Activated B cell treated with CpG ODN at 0.5 μM for 24 hours (primary cell): ENCODE measurements at regions of chr14 and their contacts with region 1.

Region 1: GRCh38 chr14:100271247-100271939 is 32.4 kb downstream of the YY1 start:
- DNase-seq: no peak
- ATAC-seq: no peak
- H3K4me3 Mint-ChIP-seq: no peak overlapping the region
- H3K27ac Mint-ChIP-seq: no peak overlapping the region
- H3K4me1 Mint-ChIP-seq: peaks cover 24% of the 10 kb centered on the region
- H3K27me3 Mint-ChIP-seq: no peaks in the 10 kb centered on the region
- CTCF ChIP-seq: no peak

Region 2: GRCh38 chr14:100078991-100079725 is 192.2 kb before region 1 on chr14:
- CTCF ChIA-PET with region 1: no interaction called
- POLR2A ChIA-PET with region 1: no interaction called
- intact Hi-C with region 1: no loop called
- DNase-seq: no peak
- ATAC-seq: peak; percentile 60
- H3K4me3 Mint-ChIP-seq: peak overlapping the region; percentile 49
- H3K27ac Mint-ChIP-seq: peak overlapping the region; percentile 80
- H3K4me1 Mint-ChIP-seq: peaks cover 93% of the 10 kb centered on the region
- H3K27me3 Mint-ChIP-seq: no peaks in the 10 kb centered on the region
- CTCF ChIP-seq: no peak

Region 3: GRCh38 chr14:100256339-100256895 is 15.0 kb before region 1 on chr14:
- CTCF ChIA-PET with region 1: no interaction called
- POLR2A ChIA-PET with region 1: no interaction called
- intact Hi-C with region 1: loop called (anchors 2 kb)
- DNase-seq: no peak
- ATAC-seq: peak; percentile 79
- H3K4me3 Mint-ChIP-seq: peak overlapping the region; percentile 3
- H3K27ac Mint-ChIP-seq: peak overlapping the region; percentile 70
- H3K4me1 Mint-ChIP-seq: peaks cover 80% of the 10 kb centered on the region
- H3K27me3 Mint-ChIP-seq: no peaks in the 10 kb centered on the region
- CTCF ChIP-seq: no peak

Region 4: GRCh38 chr14:100317912-100318808 is 46.8 kb after region 1 on chr14:
- CTCF ChIA-PET with region 1: no interaction called
- POLR2A ChIA-PET with region 1: no interaction called
- intact Hi-C with region 1: loop called (anchors 1 kb)
- DNase-seq: peak; percentile 76
- ATAC-seq: peak; percentile 98
- H3K4me3 Mint-ChIP-seq: peak overlapping the region; percentile 80
- H3K27ac Mint-ChIP-seq: peak overlapping the region; percentile 82
- H3K4me1 Mint-ChIP-seq: peaks cover 3% of the 10 kb centered on the region
- H3K27me3 Mint-ChIP-seq: no peaks in the 10 kb centered on the region
- CTCF ChIP-seq: peak; percentile 78

Region 5: DNA sequence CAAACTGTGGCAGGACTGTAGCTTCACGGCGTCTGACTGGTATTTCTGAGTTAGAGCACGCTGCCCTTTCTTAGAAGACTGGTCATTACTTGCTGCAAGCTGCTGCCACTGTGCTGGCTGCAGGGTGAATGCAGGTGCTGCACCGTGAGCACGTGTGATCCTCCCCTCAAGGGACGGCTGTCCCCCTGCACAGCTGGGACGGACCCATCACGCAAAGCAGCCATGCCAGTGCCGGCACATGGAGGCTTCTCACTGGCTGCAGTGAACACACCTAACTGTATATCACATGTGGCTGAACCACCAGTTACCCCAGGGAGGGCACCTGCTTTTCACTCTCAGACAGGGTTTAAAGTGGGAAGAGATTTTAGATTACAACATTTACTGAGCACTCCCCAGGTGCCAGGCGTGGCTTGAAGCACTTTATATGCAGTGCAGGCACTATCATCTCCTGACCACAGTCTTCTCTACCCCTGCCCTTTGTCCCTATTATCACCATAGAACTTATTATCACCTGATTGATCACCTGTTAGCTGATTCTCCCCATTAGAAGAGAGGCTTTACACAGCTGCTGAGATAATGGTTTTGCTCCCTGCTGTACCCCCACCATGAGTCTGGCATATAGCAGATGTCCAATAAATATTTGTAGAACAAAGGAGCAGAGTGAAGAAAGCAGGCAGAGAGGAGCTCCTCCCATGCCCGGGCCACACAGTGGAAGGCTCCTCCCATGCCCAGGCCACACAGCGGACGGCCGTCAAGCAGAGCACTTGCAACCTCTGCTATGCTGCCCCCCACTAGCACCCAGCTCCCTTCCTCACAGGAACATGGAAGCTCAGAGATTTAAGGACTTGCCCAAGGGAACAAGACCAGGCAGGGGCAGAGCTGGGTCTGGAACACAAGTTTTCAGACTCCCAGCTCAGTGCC is 77.7 kb after region 1 on chr14:
- CTCF ChIA-PET with region 1: no interaction called
- POLR2A ChIA-PET with region 1: no interaction called
- intact Hi-C with region 1: no loop called
- DNase-seq: no peak
- ATAC-seq: no peak
- H3K4me3 Mint-ChIP-seq: no peak overlapping the region
- H3K27ac Mint-ChIP-seq: no peak overlapping the region
- H3K4me1 Mint-ChIP-seq: peaks cover 6% of the 10 kb centered on the region
- H3K27me3 Mint-ChIP-seq: no peaks in the 10 kb centered on the region
- CTCF ChIP-seq: no peak

Region 6: GRCh38 chr14:100654814-100655740 is 383.7 kb after region 1 on chr14:
- CTCF ChIA-PET with region 1: no interaction called
- POLR2A ChIA-PET with region 1: no interaction called
- intact Hi-C with region 1: loop called (anchors 10 kb)
- DNase-seq: no peak
- ATAC-seq: peak; percentile 49
- H3K4me3 Mint-ChIP-seq: no peak overlapping the region
- H3K27ac Mint-ChIP-seq: no peak overlapping the region
- H3K4me1 Mint-ChIP-seq: peaks cover 8% of the 10 kb centered on the region
- H3K27me3 Mint-ChIP-seq: peaks cover 16% of the 10 kb centered on the region
- CTCF ChIP-seq: no peak